ENCODE measurements at regions of chr2 and their contacts with region 1.

Region 1: GRCh38 chr2:68031542-68032160 is 31.2 kb downstream of the C1D start:
- DNase-seq: peak in 1 of 2 experiments; percentile 54
- H3K4me3 ChIP-seq: no peak overlapping the region
- H3K4me3 Mint-ChIP-seq: no peak overlapping the region
- H3K27ac Mint-ChIP-seq: no peak overlapping the region
- H3K4me1 ChIP-seq: no peaks in the 10 kb centered on the region
- H3K4me1 Mint-ChIP-seq: no peaks in the 10 kb centered on the region
- H3K27me3 ChIP-seq: no peaks in the 10 kb centered on the region
- H3K27me3 Mint-ChIP-seq: no peaks in the 10 kb centered on the region
- CTCF ChIP-seq: peak; percentile 40 to 69

Region 2: GRCh38 chr2:66587216-66587615 is 1444.4 kb before region 1 on chr2:
- CTCF ChIA-PET with region 1: no interaction called
- POLR2A ChIA-PET with region 1: no interaction called
- intact Hi-C with region 1: loop called (anchors 1 kb)
- DNase-seq: peak; percentile 55 to 60
- H3K4me3 ChIP-seq: no peak overlapping the region
- H3K4me3 Mint-ChIP-seq: no peak overlapping the region
- H3K27ac Mint-ChIP-seq: no peak overlapping the region
- H3K4me1 ChIP-seq: no peaks in the 10 kb centered on the region
- H3K4me1 Mint-ChIP-seq: no peaks in the 10 kb centered on the region
- H3K27me3 ChIP-seq: no peaks in the 10 kb centered on the region; the same call in 1 of the 2 replicates
- H3K27me3 Mint-ChIP-seq: no peaks in the 10 kb centered on the region
- CTCF ChIP-seq: peak in 1 of 2 experiments; percentile 69

Region 3: GRCh38 chr2:67234439-67234838 is 797.2 kb before region 1 on chr2:
- CTCF ChIA-PET with region 1: no interaction called
- POLR2A ChIA-PET with region 1: no interaction called
- intact Hi-C with region 1: loop called (anchors 5 kb)
- DNase-seq: peak in 1 of 2 experiments; percentile 47
- H3K4me3 ChIP-seq: no peak overlapping the region
- H3K4me3 Mint-ChIP-seq: no peak overlapping the region
- H3K27ac Mint-ChIP-seq: no peak overlapping the region
- H3K4me1 ChIP-seq: no peaks in the 10 kb centered on the region
- H3K4me1 Mint-ChIP-seq: no peaks in the 10 kb centered on the region
- H3K27me3 ChIP-seq: no peaks in the 10 kb centered on the region
- H3K27me3 Mint-ChIP-seq: peaks cover 6% of the 10 kb centered on the region
- CTCF ChIP-seq: peak; percentile 50 to 67

Region 4: GRCh38 chr2:67733517-67733916 is 298.1 kb before region 1 on chr2:
- CTCF ChIA-PET with region 1: interaction called, 4 read pairs
- POLR2A ChIA-PET with region 1: no interaction called
- intact Hi-C with region 1: loop called (anchors 1 kb)
- DNase-seq: peak; percentile 36 to 37
- H3K4me3 ChIP-seq: no peak overlapping the region
- H3K4me3 Mint-ChIP-seq: no peak overlapping the region
- H3K27ac Mint-ChIP-seq: no peak overlapping the region
- H3K4me1 ChIP-seq: no peaks in the 10 kb centered on the region
- H3K4me1 Mint-ChIP-seq: no peaks in the 10 kb centered on the region
- H3K27me3 ChIP-seq: no peaks in the 10 kb centered on the region
- H3K27me3 Mint-ChIP-seq: peaks cover 1% of the 10 kb centered on the region
- CTCF ChIP-seq: peak; percentile 26 to 45

Region 5: DNA sequence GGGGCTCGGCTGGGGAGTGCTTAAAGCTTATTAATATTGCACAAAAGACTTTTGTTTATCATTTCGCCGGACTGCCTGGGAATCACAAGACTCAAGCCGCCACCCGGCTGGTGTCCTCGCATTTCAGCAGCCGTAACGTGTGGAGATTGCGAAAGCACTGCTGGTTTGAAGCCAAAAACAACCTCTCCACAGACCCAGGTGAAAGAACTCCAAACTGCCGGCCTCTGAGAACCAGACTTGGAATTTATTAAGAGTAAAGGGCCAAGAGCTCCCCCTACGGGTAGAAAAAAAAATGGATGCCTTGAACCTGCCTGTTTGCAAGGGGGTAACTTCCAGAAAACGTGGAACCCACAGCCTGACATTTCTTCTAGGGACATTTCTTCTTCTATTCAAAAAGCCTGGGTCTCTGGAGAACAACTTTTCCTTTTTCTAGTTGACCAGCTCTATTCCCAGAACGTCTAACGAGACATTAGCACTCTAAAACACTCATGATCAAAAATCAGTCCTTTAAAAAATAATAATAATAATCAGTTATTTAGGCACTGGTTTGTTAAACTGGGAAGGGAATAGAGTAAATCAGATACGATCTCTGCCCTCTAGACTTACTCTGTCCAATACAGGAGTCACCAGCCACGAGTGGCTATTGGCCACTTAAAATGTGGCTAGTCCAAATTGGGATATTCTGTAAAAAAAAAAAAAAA is 185.1 kb before region 1 on chr2:
- CTCF ChIA-PET with region 1: no interaction called
- POLR2A ChIA-PET with region 1: no interaction called
- intact Hi-C with region 1: loop called (anchors 2 kb)
- DNase-seq: peak; percentile 83 to 85
- H3K4me3 ChIP-seq: no peak overlapping the region
- H3K4me3 Mint-ChIP-seq: peak overlapping the region; percentile 46
- H3K27ac Mint-ChIP-seq: no peak overlapping the region
- H3K4me1 ChIP-seq: peaks cover 5% of the 10 kb centered on the region; the same call in 1 of the 2 replicates
- H3K4me1 Mint-ChIP-seq: no peaks in the 10 kb centered on the region
- H3K27me3 ChIP-seq: no peaks in the 10 kb centered on the region
- H3K27me3 Mint-ChIP-seq: peaks cover 3% of the 10 kb centered on the region
- CTCF ChIP-seq: peak; percentile 78 to 81

Region 6: GRCh38 chr2:68018727-68019126 is 12.9 kb before region 1 on chr2:
- CTCF ChIA-PET with region 1: no interaction called
- POLR2A ChIA-PET with region 1: no interaction called
- intact Hi-C with region 1: no loop called
- DNase-seq: no peak
- H3K4me3 ChIP-seq: no peak overlapping the region
- H3K4me3 Mint-ChIP-seq: no peak overlapping the region
- H3K27ac Mint-ChIP-seq: no peak overlapping the region
- H3K4me1 ChIP-seq: no peaks in the 10 kb centered on the region
- H3K4me1 Mint-ChIP-seq: no peaks in the 10 kb centered on the region
- H3K27me3 ChIP-seq: no peaks in the 10 kb centered on the region
- H3K27me3 Mint-ChIP-seq: peaks cover 6% of the 10 kb centered on the region
- CTCF ChIP-seq: no peak

Region 7: DNA sequence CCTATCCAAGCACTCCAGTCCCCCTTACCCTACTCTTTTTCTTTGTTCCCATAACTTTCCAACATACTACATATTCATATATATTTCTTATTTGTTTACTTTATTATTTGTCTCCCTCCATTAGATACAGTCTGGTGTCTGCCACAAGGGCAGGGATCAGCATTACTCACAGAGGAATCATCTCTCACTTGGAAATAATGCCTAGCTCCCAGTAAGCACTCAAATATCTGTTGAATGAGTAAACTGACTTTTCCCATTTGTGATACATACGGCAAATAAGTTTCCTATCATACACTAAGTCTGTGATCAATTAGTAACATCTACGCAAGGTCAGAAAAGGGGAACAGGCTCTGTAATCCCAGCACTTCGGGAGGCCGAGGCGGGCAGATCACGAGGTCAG is 12.4 kb after region 1 on chr2:
- CTCF ChIA-PET with region 1: no interaction called
- POLR2A ChIA-PET with region 1: no interaction called
- intact Hi-C with region 1: no loop called
- DNase-seq: no peak
- H3K4me3 ChIP-seq: no peak overlapping the region
- H3K4me3 Mint-ChIP-seq: no peak overlapping the region
- H3K27ac Mint-ChIP-seq: no peak overlapping the region
- H3K4me1 ChIP-seq: no peaks in the 10 kb centered on the region
- H3K4me1 Mint-ChIP-seq: peaks cover 6% of the 10 kb centered on the region
- H3K27me3 ChIP-seq: no peaks in the 10 kb centered on the region
- H3K27me3 Mint-ChIP-seq: no peaks in the 10 kb centered on the region
- CTCF ChIP-seq: no peak

Measured in Caco-2 (cell line).